HCT116 (cell line): ENCODE measurements at regions of chr13 and their contacts with region 1.

Region 1: GRCh38 chr13:27449936-27450828 is at the start of gene MTIF3:
- DNase-seq: peak; percentile 95
- ATAC-seq: peak; percentile 91
- H3K4me3 ChIP-seq: peak within 1 kb of the TSS; percentile 61 to 68
- H3K27ac ChIP-seq: peak within 1 kb of the TSS; percentile 99
- H3K4me1 ChIP-seq: peaks cover 14 to 21% of the 10 kb centered on the region in 2 experiments
- H3K27me3 ChIP-seq: no peaks in the 10 kb centered on the region
- CTCF ChIP-seq: no peak
- POLR2A ChIP-seq: peak; percentile 88
- RAD21 ChIP-seq: no peak
- total RNA-seq, gene MTIF3: 27.8 TPM

Region 2: GRCh38 chr13:27424246-27425157 is 25.7 kb before region 1 on chr13 and contains the start of gene GTF3A:
- CTCF ChIA-PET with region 1: interaction called, 3 read pairs
- POLR2A ChIA-PET with region 1: interaction called, 21 read pairs
- RAD21 ChIA-PET with region 1: no interaction called
- intact Hi-C with region 1: loop called (anchors 1 kb)
- DNase-seq: peak; percentile 54
- ATAC-seq: peak; percentile 69
- H3K4me3 ChIP-seq: peak within 1 kb of the TSS; percentile 63 to 70
- H3K27ac ChIP-seq: peak within 1 kb of the TSS; percentile 82
- H3K4me1 ChIP-seq: peaks cover 29 to 50% of the 10 kb centered on the region in 2 experiments
- H3K27me3 ChIP-seq: no peaks in the 10 kb centered on the region
- CTCF ChIP-seq: no peak
- POLR2A ChIP-seq: peak; percentile 85
- RAD21 ChIP-seq: no peak
- total RNA-seq, gene GTF3A: 102 TPM

Region 3: GRCh38 chr13:28582225-28582891 is 1132.2 kb after region 1 on chr13:
- CTCF ChIA-PET with region 1: no interaction called
- POLR2A ChIA-PET with region 1: no interaction called
- RAD21 ChIA-PET with region 1: no interaction called
- intact Hi-C with region 1: no loop called
- DNase-seq: no peak
- ATAC-seq: no peak
- H3K4me3 ChIP-seq: no peak overlapping the region
- H3K27ac ChIP-seq: no peak overlapping the region
- H3K4me1 ChIP-seq: no peaks in the 10 kb centered on the region
- H3K27me3 ChIP-seq: no peaks in the 10 kb centered on the region
- CTCF ChIP-seq: no peak
- POLR2A ChIP-seq: no peak
- RAD21 ChIP-seq: no peak